Activated naive CD4-positive, alpha-beta T cell treated with anti-CD3 and anti-CD28 coated beads, Interleukin-2, amount 10 ng/mL, durations not matched to agents 7 days and 5 days (primary cell): ENCODE measurements at regions of chr1 and their contacts with region 1.

Region 1: DNA sequence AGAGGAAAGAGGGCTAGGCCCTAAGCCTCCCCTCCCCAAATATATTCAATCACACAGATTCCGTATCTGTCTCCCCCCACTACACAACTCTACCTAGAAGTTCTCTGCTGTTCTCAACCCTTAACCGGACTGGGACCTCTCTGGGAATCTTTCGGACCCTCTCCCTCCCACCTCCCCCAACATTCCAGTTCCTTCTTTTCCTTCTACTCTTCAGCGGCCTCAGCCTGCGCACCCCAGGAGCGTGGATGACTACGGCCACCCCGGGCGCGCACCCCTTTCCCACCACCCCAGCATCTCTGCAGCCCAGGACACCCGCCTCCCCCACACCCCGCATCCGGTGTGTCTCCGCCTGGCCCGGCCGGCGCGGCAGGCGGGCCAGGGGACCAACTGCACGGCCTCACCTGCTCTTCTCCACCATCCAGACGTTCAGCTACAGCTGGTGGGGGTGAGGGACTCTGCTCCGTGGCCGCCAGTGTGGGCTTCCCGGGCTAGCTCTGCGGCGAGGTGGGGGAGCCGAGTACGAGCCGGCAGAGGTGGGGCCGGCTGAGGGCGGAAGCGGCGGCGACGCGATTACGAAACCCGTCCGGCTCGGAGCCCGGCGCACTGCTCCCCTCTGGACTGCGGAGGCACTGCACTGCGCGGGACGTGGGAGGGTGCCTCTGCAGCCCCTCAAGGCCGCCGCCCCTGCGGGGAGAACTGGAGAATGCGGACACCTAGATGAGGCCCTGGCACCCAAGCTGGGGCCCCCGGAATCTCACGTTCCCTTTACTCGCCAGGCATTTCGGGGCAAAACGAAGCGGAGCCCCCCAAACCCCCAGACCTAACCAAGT is at the start of gene CDC42SE1:
- DNase-seq: peak; percentile 90
- H3K4me3 Mint-ChIP-seq: peak within 1 kb of the TSS; percentile 97
- H3K27ac Mint-ChIP-seq: peak within 1 kb of the TSS; percentile 98
- H3K4me1 Mint-ChIP-seq: peaks cover 43% of the 10 kb centered on the region
- H3K27me3 Mint-ChIP-seq: peaks cover 5% of the 10 kb centered on the region

Region 2: GRCh38 chr1:151013518-151013917 is 45.8 kb before region 1 on chr1:
- CTCF ChIA-PET with region 1: no interaction called
- DNase-seq: no peak
- H3K4me3 Mint-ChIP-seq: no peak overlapping the region
- H3K27ac Mint-ChIP-seq: no peak overlapping the region
- H3K4me1 Mint-ChIP-seq: peaks cover 42% of the 10 kb centered on the region
- H3K27me3 Mint-ChIP-seq: no peaks in the 10 kb centered on the region

Region 3: DNA sequence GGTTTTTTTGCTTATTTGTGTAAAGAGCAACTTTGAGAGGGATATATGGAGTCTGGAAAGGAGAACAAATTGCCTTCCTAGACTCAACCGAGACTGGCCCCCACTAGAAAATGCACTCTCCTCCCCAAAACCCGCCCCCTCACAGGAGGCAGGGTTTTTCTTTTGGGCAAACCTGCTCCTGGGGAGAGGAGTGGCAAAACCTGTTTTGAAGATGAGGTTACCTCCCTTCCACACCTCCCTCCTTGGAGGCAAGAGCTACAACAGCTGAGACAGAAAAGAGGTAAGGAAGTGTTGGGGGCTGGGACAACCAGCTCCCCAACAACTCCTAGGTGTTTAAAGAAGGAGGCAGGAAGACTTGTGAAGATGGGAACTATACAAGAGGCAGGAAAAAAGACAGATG is 22.9 kb before region 1 on chr1 and contains the start of gene BNIPL:
- CTCF ChIA-PET with region 1: no interaction called
- DNase-seq: no peak
- H3K4me3 Mint-ChIP-seq: no peak within 1 kb of the TSS
- H3K27ac Mint-ChIP-seq: no peak within 1 kb of the TSS
- H3K4me1 Mint-ChIP-seq: peaks cover 5% of the 10 kb centered on the region
- H3K27me3 Mint-ChIP-seq: no peaks in the 10 kb centered on the region

Region 4: GRCh38 chr1:151047925-151048645 is 11.2 kb before region 1 on chr1:
- CTCF ChIA-PET with region 1: interaction called, 16 read pairs
- DNase-seq: peak; percentile 75
- H3K4me3 Mint-ChIP-seq: peak overlapping the region; percentile 77
- H3K27ac Mint-ChIP-seq: peak overlapping the region; percentile 76
- H3K4me1 Mint-ChIP-seq: peaks cover 73% of the 10 kb centered on the region
- H3K27me3 Mint-ChIP-seq: no peaks in the 10 kb centered on the region